Activated T-helper 1 cell treated with anti-CD3 and anti-CD28 coated beads, Interleukin-12 subunit alpha, Interleukin-12 subunit beta, Interleukin-2, Interleukin-4 antibody, amounts not matched to agents 30 ng/mL and 10 ng/mL and 1 ng/mL, durations not matched to agents 14 hours and 24 hours and 36 hours (primary cell): ENCODE measurements at regions of chr2 and their contacts with region 1.

Region 1: DNA sequence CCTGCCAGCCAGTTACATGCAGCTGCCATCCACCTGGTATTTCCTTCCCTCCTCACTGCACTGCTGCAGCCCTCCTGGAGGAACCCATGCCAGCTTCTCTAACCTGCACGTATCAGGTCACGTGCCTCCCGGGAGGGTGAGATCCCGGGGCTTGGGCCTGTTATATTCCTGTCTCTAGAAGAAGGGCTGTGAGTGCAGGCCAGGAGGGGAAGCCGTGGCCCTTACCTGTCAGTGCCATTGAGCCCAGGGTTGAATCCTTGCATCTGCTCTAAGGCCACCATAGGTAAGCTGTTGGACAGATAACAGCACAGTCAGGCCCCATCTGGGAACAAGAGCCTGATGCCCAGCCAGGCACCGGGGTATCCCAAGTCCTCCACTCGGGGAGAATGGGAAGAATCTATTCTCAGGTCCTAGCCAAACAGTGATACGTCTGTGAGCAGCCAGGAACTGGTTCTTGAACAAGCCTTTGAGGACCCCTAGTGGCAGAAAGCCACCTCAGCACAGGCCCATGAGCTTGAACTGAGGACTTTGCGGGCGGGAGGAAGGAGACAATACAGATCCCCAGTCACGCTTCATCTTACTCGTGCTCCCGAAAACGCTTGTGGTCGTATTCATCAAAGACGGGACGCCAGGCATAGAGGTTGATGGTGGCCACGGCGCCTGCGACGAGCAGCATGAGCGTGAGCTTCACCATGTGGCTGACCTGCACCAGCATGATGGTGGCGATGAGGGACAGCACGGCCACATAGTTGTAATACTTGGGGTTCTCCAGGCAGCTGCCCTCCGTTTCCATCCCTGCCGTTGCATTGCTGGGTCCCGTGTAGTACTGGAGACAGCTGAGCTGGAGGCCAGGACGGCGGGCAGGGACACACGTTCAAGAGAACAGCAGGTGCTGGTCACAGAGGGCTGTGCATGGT is 34.4 kb downstream of the CENPO start:
- DNase-seq: peak; percentile 65
- H3K4me3 Mint-ChIP-seq: no peak overlapping the region
- H3K27ac Mint-ChIP-seq: peak overlapping the region; percentile 86
- H3K4me1 Mint-ChIP-seq: peaks cover 25% of the 10 kb centered on the region
- H3K27me3 Mint-ChIP-seq: no peaks in the 10 kb centered on the region

Region 2: DNA sequence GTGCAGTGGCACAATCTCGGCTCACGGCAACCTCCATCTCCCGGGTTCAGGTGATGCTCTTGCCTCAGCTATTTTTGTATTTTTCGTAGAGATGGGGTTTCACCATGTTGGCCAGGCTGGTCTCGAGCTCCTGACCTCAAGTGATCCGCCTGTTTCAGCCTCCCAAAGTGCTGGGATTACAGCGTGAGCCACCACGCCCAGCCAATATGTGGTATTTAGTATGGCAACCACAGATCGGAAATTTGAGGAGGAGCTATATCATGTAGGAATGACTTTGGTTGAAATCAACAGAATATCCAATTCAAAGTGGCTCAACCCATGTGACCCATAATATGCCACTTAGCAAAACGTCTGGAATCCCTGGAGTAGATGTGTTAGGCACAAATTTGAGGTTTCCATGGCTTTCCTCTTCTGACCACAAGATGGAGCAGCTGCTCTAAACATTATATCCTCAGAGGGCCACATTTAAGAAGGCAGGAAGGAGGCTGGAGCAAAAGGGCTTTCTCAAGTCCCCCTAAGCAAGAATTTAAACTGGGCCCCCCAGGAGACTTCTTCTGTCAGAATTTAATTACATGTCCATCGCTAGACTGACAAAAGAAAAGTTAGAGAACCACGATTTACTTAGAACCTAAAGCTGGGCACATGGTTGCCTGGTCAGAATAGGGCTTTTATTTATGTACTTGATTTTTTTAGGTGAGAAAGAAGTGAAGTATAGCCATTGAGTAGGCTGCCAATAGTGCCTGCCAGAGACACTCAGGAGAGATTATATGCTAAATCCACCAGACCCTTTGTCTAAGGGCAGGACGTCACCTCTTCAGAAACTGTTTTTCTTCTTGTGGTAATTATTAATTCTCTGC is 417.7 kb before region 1 on chr2:
- intact Hi-C with region 1: loop called (anchors 1 kb)
- DNase-seq: peak; percentile 24
- H3K4me3 Mint-ChIP-seq: no peak overlapping the region
- H3K27ac Mint-ChIP-seq: no peak overlapping the region
- H3K4me1 Mint-ChIP-seq: peaks cover 5% of the 10 kb centered on the region
- H3K27me3 Mint-ChIP-seq: peaks cover 2% of the 10 kb centered on the region

Region 3: GRCh38 chr2:24421668-24422067 is 405.9 kb before region 1 on chr2:
- intact Hi-C with region 1: loop called (anchors 1 kb)
- DNase-seq: peak; percentile 27
- H3K4me3 Mint-ChIP-seq: no peak overlapping the region
- H3K27ac Mint-ChIP-seq: no peak overlapping the region
- H3K4me1 Mint-ChIP-seq: no peaks in the 10 kb centered on the region
- H3K27me3 Mint-ChIP-seq: peaks cover 9% of the 10 kb centered on the region

Region 4: GRCh38 chr2:24613154-24613814 is 214.3 kb before region 1 on chr2:
- intact Hi-C with region 1: loop called (anchors 1 kb)
- DNase-seq: peak; percentile 32
- H3K4me3 Mint-ChIP-seq: no peak overlapping the region
- H3K27ac Mint-ChIP-seq: peak overlapping the region; percentile 81
- H3K4me1 Mint-ChIP-seq: peaks cover 7% of the 10 kb centered on the region
- H3K27me3 Mint-ChIP-seq: no peaks in the 10 kb centered on the region

Region 5: DNA sequence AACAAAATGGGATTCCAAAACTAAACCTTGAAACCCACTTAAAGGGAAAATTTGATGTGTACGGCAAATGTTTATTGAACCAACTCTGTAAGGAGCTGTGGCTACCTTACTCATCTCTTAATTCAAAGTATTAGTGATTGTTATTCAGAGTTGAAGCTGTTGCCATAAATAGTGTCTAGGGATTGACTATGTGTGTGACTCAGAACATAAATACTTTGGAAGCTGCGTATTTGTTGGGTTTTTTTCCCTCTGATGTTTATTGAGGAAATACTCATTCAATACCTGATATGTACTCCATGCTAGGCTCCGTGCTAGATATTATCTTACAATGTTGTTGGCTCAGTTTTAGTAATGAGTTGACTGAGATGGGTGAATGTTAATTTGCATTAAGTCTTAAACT is 124.8 kb before region 1 on chr2:
- intact Hi-C with region 1: loop called (anchors 5 kb)
- DNase-seq: no peak
- H3K4me3 Mint-ChIP-seq: no peak overlapping the region
- H3K27ac Mint-ChIP-seq: peak overlapping the region; percentile 4
- H3K4me1 Mint-ChIP-seq: peaks cover 5% of the 10 kb centered on the region
- H3K27me3 Mint-ChIP-seq: no peaks in the 10 kb centered on the region

Region 6: GRCh38 chr2:24792874-24793760 is 34.5 kb before region 1 on chr2 and contains the starts of genes CENPO and PTRHD1:
- intact Hi-C with region 1: loop called (anchors 1 kb)
- DNase-seq: peak; percentile 92
- H3K4me3 Mint-ChIP-seq: peak within 1 kb of the TSS; percentile 95
- H3K27ac Mint-ChIP-seq: peak within 1 kb of the TSS; percentile 99
- H3K4me1 Mint-ChIP-seq: peaks cover 47% of the 10 kb centered on the region
- H3K27me3 Mint-ChIP-seq: peaks cover 1% of the 10 kb centered on the region
- total RNA-seq, gene CENPO: 44.7 and 48.3 TPM in 2 replicates
- total RNA-seq, gene PTRHD1: 16.5 and 17.3 TPM in 2 replicates

Region 7: DNA sequence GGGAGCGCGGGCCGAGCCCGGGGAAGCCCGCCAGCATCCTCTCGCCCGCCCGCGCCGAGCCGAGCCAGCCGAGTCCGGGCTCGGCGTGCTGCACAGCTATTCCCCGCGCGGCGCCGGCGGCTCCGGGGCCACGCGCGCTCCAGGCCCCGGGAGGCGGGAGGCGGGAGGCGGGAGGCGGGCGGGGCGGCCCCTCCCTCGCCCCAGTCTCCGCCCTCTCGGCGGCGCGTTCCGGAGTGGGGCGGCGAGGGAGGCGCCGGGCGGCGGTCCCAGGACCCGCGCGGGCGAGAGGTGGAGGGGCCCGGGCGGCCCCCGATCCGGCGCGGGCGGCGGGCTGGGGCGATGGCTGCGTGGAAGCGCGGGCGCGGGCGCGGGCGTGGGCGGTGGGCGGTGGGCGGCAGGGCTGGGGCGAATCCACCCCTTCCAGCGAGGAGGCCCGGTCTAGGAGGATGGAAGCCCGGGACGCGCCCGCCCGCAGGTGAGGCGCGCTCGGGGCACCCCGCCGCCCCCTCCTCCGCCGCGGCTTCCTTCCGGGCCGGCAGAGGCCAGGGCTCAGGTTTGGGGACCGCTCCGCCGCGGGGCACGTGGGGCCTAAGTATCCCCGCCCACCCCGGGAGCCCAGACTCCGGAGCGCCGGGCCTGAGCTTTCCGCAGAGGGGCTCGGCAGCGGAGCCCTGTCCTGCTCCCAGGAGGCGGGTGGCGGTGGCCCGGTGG is 92.7 kb after region 1 on chr2 and contains the start of gene ADCY3:
- intact Hi-C with region 1: loop called (anchors 1 kb)
- DNase-seq: peak; percentile 49
- H3K4me3 Mint-ChIP-seq: peak within 1 kb of the TSS; percentile 93
- H3K27ac Mint-ChIP-seq: peak within 1 kb of the TSS; percentile 90
- H3K4me1 Mint-ChIP-seq: peaks cover 32% of the 10 kb centered on the region
- H3K27me3 Mint-ChIP-seq: peaks cover 2% of the 10 kb centered on the region
- total RNA-seq, gene ADCY3: 101 and 108 TPM in 2 replicates

Region 8: GRCh38 chr2:25197336-25198208 is 370.0 kb after region 1 on chr2:
- intact Hi-C with region 1: no loop called
- DNase-seq: no peak
- H3K4me3 Mint-ChIP-seq: no peak overlapping the region
- H3K27ac Mint-ChIP-seq: no peak overlapping the region
- H3K4me1 Mint-ChIP-seq: peaks cover 7% of the 10 kb centered on the region
- H3K27me3 Mint-ChIP-seq: peaks cover 12% of the 10 kb centered on the region